ENCODE measurements at regions of chr6 and their contacts with region 1.

Region 1: DNA sequence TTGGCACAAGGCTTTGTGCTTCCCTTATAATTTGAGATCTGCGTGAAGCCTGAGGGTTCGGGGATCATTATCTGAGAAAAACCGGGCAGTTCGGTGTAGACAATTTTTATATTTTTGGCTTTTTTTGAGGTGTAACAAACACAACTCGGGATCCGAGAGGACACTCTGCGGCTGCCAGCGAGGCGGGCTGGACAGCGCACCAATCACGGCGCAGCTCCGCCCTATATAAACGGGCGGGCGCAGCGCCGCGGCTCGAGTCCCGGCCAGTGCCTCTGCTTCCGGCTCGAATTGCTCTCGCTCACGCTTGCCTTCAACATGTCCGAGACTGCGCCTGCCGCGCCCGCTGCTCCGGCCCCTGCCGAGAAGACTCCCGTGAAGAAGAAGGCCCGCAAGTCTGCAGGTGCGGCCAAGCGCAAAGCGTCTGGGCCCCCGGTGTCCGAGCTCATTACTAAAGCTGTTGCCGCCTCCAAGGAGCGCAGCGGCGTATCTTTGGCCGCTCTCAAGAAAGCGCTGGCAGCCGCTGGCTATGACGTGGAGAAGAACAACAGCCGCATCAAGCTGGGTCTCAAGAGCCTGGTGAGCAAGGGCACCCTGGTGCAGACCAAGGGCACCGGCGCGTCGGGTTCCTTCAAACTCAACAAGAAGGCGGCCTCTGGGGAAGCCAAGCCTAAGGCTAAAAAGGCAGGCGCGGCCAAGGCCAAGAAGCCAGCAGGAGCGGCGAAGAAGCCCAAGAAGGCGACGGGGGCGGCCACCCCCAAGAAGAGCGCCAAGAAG is 69.0 kb downstream of the HFE start:
- DNase-seq: peak; percentile 81
- ATAC-seq: peak; percentile 47
- H3K4me3 Mint-ChIP-seq: peak overlapping the region; percentile 84
- H3K27ac Mint-ChIP-seq: peak overlapping the region; percentile 98
- H3K4me1 Mint-ChIP-seq: peaks cover 22% of the 10 kb centered on the region
- H3K27me3 Mint-ChIP-seq: peaks cover 3% of the 10 kb centered on the region; the same call in 1 of the 2 replicates
- CTCF ChIP-seq: no peak

Region 2: GRCh38 chr6:25899123-25899522 is 257.1 kb before region 1 on chr6:
- CTCF ChIA-PET with region 1: no interaction called
- POLR2A ChIA-PET with region 1: no interaction called
- DNase-seq: no peak
- ATAC-seq: peak; percentile 78
- H3K4me3 Mint-ChIP-seq: no peak overlapping the region
- H3K27ac Mint-ChIP-seq: no peak overlapping the region
- H3K4me1 Mint-ChIP-seq: peaks cover 22% of the 10 kb centered on the region
- H3K27me3 Mint-ChIP-seq: no peaks in the 10 kb centered on the region; the same call in 1 of the 2 replicates
- CTCF ChIP-seq: no peak

Region 3: GRCh38 chr6:25927756-25928216 is 228.5 kb before region 1 on chr6:
- CTCF ChIA-PET with region 1: no interaction called
- POLR2A ChIA-PET with region 1: no interaction called
- DNase-seq: no peak
- ATAC-seq: no peak
- H3K4me3 Mint-ChIP-seq: no peak overlapping the region
- H3K27ac Mint-ChIP-seq: no peak overlapping the region
- H3K4me1 Mint-ChIP-seq: peaks cover 6% of the 10 kb centered on the region; the same call in 1 of the 2 replicates
- H3K27me3 Mint-ChIP-seq: no peaks in the 10 kb centered on the region
- CTCF ChIP-seq: no peak

Region 4: GRCh38 chr6:26025894-26026832 is 130.1 kb before region 1 on chr6:
- CTCF ChIA-PET with region 1: no interaction called
- POLR2A ChIA-PET with region 1: interaction called, 72 read pairs
- DNase-seq: peak; percentile 95
- ATAC-seq: peak; percentile 12
- H3K4me3 Mint-ChIP-seq: peak overlapping the region; percentile 92
- H3K27ac Mint-ChIP-seq: peak overlapping the region; percentile 98
- H3K4me1 Mint-ChIP-seq: peaks cover 73% of the 10 kb centered on the region
- H3K27me3 Mint-ChIP-seq: no peaks in the 10 kb centered on the region
- CTCF ChIP-seq: peak; percentile 60

Region 5: DNA sequence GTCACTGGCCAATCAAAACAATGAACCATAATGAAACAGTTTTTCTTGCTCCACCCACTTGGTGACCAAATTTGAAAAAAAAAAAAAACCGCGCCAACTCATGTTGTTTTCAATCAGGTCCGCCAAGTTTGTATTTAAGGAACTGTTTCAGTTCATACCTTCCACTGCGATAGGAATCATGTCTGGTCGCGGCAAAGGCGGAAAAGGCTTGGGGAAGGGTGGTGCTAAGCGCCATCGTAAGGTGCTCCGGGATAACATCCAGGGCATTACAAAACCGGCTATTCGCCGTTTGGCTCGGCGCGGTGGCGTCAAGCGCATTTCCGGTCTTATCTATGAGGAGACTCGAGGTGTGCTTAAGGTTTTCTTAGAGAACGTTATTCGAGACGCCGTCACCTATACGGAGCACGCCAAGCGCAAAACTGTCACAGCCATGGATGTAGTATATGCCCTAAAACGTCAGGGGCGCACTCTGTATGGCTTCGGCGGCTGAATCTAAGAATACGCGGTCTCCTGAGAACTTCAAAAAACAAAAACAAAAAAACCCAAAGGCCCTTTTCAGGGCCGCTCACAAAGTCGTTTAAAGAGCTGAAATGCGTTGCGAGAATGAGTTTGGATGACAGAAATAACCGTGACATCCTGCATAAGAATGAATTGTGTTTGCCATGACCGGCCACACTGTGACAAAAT is 52.4 kb before region 1 on chr6:
- CTCF ChIA-PET with region 1: no interaction called
- POLR2A ChIA-PET with region 1: interaction called, 58 read pairs
- DNase-seq: peak; percentile 73
- ATAC-seq: peak; percentile 79
- H3K4me3 Mint-ChIP-seq: peak overlapping the region; percentile 84
- H3K27ac Mint-ChIP-seq: peak overlapping the region; percentile 98
- H3K4me1 Mint-ChIP-seq: peaks cover 23% of the 10 kb centered on the region
- H3K27me3 Mint-ChIP-seq: no peaks in the 10 kb centered on the region
- CTCF ChIP-seq: no peak

Region 6: DNA sequence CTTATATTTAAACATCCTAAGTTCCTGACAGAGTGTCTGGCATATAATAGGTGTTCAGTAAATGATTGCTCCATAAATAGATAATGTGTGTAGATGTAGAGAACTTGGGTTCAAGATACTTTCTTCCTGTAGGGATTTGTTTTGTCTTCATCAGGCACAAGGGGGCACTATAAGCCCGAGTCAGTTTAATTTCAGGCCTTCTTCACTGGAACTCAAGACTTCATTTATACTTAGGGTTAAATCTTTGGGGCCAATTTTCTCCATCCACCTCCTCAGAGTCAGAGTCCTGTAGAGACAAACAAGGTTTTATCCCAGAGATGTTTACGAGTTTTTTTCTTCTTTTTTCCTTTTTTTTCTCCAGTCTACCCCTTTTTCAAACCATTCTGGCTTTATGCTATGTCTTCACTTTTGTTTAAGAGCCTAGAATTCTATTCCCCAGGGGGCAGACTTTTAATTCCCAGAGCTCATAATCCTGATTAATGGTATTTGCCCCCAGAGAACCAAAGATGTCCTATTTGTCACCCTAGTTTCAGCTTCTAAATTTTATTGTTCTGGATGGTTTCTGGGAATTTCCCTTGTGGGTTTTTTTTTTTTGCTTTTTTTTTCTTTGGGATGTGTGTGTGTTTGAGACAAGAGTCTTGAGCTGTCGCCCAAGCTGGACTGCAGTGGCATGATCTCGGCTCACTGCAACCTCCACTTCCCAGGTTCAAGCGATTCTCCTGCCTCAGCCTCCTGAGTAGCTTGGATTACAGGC is 19.3 kb after region 1 on chr6:
- CTCF ChIA-PET with region 1: interaction called, 3 read pairs
- POLR2A ChIA-PET with region 1: interaction called, 49 read pairs
- DNase-seq: peak; percentile 46
- ATAC-seq: peak; percentile 7; the same call in 1 of the 2 replicates
- H3K4me3 Mint-ChIP-seq: peak overlapping the region; percentile 25; the same call in 1 of the 2 replicates
- H3K27ac Mint-ChIP-seq: 0 out of 2 replicates have a peak overlapping the region, but pooled peaks have one; percentile 45
- H3K4me1 Mint-ChIP-seq: peaks cover 28% of the 10 kb centered on the region
- H3K27me3 Mint-ChIP-seq: no peaks in the 10 kb centered on the region; the same call in 1 of the 2 replicates
- CTCF ChIP-seq: peak; percentile 28; the same call in 1 of the 2 replicates

Region 7: DNA sequence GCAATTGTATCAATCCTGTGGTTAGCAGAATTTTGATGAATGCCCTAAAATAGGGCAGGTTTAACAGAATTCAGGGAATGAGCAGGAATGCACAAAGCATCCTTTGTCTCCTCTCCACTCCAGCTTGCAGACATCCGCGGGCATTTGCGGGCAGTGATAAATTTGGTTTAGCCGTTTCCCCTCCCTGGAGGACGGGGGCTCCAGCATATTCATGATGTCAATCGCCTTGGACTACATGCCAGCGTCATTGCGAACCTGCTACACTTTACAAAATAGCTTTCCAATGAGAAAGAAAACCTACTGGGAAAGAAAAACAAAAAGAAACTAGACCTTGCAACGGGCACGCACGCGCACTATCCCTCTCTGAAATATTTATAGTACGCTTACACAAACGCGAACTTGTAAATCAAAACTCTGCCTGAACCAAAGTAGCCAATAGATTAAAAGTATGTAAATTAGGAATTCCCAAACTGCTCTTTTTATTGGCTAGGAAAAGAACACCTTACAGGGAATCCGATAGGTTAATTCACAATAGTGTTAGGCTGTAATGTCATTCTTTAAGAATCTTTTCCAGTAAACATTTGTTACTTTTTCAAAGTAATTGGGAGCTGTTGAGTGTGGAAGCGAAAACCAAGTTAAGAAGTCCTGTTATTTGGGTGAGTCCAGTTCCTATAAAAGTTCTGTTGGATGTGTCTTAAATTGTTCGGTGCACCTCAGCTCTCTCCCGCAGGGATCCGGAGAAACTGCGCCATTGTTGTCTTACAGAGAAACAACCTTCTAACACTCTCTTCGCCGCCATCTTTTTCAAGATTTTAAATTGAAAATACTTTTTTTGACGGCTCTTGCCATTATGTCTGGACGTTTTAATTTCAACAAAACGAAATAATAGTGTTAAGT is 67.6 kb after region 1 on chr6:
- CTCF ChIA-PET with region 1: interaction called, 3 read pairs
- POLR2A ChIA-PET with region 1: interaction called, 45 read pairs
- DNase-seq: no peak
- ATAC-seq: peak; percentile 69
- H3K4me3 Mint-ChIP-seq: no peak overlapping the region
- H3K27ac Mint-ChIP-seq: no peak overlapping the region
- H3K4me1 Mint-ChIP-seq: peaks cover 42% of the 10 kb centered on the region
- H3K27me3 Mint-ChIP-seq: no peaks in the 10 kb centered on the region
- CTCF ChIP-seq: no peak

Region 8: DNA sequence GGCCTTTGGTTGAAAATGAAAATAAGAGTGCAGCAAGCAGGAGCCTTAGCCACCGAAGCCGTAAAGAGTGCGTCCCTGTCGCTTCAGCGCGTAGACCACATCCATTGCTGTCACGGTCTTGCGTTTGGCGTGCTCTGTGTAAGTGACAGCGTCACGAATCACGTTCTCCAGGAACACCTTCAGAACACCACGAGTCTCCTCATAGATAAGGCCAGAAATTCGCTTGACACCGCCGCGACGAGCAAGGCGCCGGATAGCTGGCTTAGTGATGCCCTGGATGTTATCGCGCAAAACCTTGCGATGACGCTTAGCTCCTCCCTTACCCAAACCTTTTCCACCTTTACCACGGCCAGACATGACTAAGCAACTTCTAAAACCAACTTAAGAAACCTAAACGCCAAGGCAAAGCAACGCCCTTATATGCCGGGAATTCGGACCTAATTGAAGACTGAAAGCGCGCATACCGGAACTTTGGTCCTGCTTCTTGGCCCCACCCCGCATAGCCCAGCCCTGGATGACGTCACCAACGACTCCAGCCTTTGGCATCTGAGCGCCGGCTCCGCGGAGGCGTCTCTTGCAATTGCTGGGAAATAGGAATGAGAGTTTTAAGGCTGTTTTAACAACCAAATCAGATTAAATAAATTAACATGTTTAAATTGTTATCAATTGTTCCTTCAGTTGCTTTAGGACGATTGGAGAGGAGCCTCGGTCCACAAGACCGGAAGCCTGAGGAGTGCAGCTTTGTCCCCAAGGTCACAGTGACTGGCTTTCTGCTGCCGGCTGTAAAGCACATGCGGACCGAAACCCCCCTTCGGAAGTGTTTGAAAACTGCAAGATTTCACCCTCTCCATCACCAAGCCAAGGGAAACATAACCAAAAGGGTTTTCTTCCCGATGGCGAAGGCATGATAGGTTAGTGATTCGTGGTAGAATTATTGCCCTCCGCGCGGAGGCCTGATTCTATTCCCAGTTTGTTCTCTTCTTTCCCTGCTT is 129.2 kb after region 1 on chr6:
- CTCF ChIA-PET with region 1: no interaction called
- POLR2A ChIA-PET with region 1: interaction called, 14 read pairs
- DNase-seq: peak; percentile 96
- ATAC-seq: peak; percentile 73
- H3K4me3 Mint-ChIP-seq: peak overlapping the region; percentile 97
- H3K27ac Mint-ChIP-seq: peak overlapping the region; percentile 100
- H3K4me1 Mint-ChIP-seq: peaks cover 16% of the 10 kb centered on the region
- H3K27me3 Mint-ChIP-seq: peaks cover 4% of the 10 kb centered on the region
- CTCF ChIP-seq: no peak

Region 9: GRCh38 chr6:27838058-27838944 is 1682.0 kb after region 1 on chr6:
- CTCF ChIA-PET with region 1: no interaction called
- POLR2A ChIA-PET with region 1: interaction called, 17 read pairs
- DNase-seq: peak; percentile 84
- ATAC-seq: peak; percentile 84
- H3K4me3 Mint-ChIP-seq: no peak overlapping the region
- H3K27ac Mint-ChIP-seq: no peak overlapping the region
- H3K4me1 Mint-ChIP-seq: peaks cover 28% of the 10 kb centered on the region
- H3K27me3 Mint-ChIP-seq: no peaks in the 10 kb centered on the region
- CTCF ChIP-seq: no peak